Caco-2 (cell line): ENCODE measurements at regions of chr13 and their contacts with region 1.

Region 1: GRCh38 chr13:44710576-44710975 is 134.4 kb upstream of the TSC22D1 start:
- DNase-seq: no peak
- H3K4me3 ChIP-seq: no peak overlapping the region
- H3K4me3 Mint-ChIP-seq: no peak overlapping the region
- H3K27ac Mint-ChIP-seq: no peak overlapping the region
- H3K4me1 ChIP-seq: peaks cover 18% of the 10 kb centered on the region
- H3K4me1 Mint-ChIP-seq: peaks cover 7% of the 10 kb centered on the region
- H3K27me3 ChIP-seq: no peaks in the 10 kb centered on the region
- H3K27me3 Mint-ChIP-seq: no peaks in the 10 kb centered on the region
- CTCF ChIP-seq: no peak

Region 2: DNA sequence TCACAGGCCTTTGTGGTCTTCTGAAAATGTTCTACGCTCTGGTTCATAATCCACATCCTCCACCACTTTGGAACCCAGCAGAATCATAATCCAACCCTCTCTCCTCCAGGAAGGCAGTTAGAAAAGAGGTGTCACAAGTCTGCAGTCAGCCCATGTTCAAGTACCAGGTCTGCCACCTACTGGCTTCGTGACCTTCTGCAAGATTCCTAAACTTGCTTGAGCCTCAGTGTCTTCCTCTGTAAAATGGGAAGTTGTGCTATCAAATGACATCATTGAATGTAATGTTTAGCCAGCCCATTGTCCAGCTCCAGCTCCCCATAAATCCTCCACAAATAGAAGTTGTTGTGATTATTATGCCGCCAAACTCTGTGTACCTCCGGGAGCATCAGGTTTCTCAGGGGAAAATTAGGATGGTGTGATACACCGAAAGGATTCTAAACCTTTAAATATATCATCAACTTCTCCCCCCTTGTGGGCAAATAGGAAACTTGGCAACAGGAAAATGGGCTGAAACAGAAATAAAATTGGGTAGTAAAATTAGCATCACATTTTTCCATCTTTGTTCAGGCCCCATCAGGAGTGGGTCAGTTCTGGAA is 169.0 kb after region 1 on chr13:
- CTCF ChIA-PET with region 1: no interaction called
- POLR2A ChIA-PET with region 1: no interaction called
- intact Hi-C with region 1: loop called (anchors 10 kb)
- DNase-seq: peak; percentile 39 to 52
- H3K4me3 ChIP-seq: no peak overlapping the region
- H3K4me3 Mint-ChIP-seq: no peak overlapping the region
- H3K27ac Mint-ChIP-seq: no peak overlapping the region
- H3K4me1 ChIP-seq: no peaks in the 10 kb centered on the region
- H3K4me1 Mint-ChIP-seq: no peaks in the 10 kb centered on the region
- H3K27me3 ChIP-seq: no peaks in the 10 kb centered on the region
- H3K27me3 Mint-ChIP-seq: no peaks in the 10 kb centered on the region
- CTCF ChIP-seq: peak; percentile 47 to 48